Naive thymus-derived CD4-positive, alpha-beta T cell (primary cell): ENCODE measurements at regions of chrX and their contacts with region 1.

Region 1: GRCh38 chrX:119693040-119693995 is at the start of gene SEPTIN6:
- DNase-seq: peak; percentile 69 to 93 (median 88)
- ATAC-seq: peak; percentile 83
- H3K4me3 ChIP-seq: peak within 1 kb of the TSS; percentile 77
- H3K4me3 Mint-ChIP-seq: peak within 1 kb of the TSS; percentile 96 to 100 (median 99)
- H3K27ac ChIP-seq: peak within 1 kb of the TSS; percentile 89
- H3K27ac Mint-ChIP-seq: peak within 1 kb of the TSS; percentile 95 to 99 (median 98)
- H3K4me1 ChIP-seq: peaks cover 0 to 7% of the 10 kb centered on the region in 2 donors
- H3K4me1 Mint-ChIP-seq: peaks cover 7 to 41% (median 13%) of the 10 kb centered on the region in 7 donors
- H3K27me3 ChIP-seq: no peaks in the 10 kb centered on the region
- H3K27me3 Mint-ChIP-seq: no peaks in the 10 kb centered on the region
- total RNA-seq, gene SEPTIN6: 151 to 315 (median 221) TPM

Region 2: GRCh38 chrX:118928151-118928550 is 765.2 kb before region 1 on chrX:
- CTCF ChIA-PET with region 1: no interaction called
- POLR2A ChIA-PET with region 1: no interaction called
- intact Hi-C with region 1: no loop called
- DNase-seq: no peak
- ATAC-seq: no peak
- H3K4me3 ChIP-seq: no peak overlapping the region
- H3K4me3 Mint-ChIP-seq: no peak overlapping the region
- H3K27ac ChIP-seq: no peak overlapping the region
- H3K27ac Mint-ChIP-seq: no peak overlapping the region
- H3K4me1 ChIP-seq: no peaks in the 10 kb centered on the region
- H3K4me1 Mint-ChIP-seq: no peaks in the 10 kb centered on the region
- H3K27me3 ChIP-seq: no peaks in the 10 kb centered on the region
- H3K27me3 Mint-ChIP-seq: no peaks in the 10 kb centered on the region

Region 3: DNA sequence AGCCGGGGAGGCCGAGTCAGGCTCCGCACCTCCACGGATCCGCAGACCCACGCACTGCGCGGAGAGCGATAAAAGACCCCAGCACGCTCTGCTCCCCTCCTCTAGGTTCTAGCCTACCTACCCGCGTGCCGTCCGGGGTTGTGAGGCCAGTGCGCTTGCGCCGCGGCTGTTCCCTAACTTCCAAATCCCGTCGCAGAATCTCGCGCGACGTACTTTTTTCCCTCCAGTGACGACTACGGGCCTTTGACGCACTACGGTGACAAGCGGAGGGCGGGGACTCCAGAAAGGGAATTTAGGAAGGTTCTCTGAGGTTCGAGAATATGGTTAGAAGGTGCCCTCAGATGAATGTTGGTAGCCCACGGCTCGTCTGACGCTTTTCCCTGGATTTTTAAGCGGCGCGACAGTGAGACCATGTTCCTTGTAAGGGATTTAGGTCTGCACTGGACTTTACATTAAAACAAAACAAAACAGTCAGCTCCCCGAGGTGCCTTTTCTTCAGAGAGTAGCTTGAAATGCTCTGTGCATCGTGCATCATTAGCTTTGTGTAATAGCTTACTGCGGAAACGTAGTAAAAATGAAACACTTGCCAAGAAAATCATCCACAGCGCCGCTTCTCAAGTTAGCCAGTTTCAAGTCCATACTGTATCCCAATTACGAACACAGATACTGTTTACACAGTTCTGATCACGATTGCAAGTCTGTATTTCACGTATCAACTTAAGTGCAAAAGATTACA is 86.9 kb before region 1 on chrX and contains the start of gene NKRF:
- CTCF ChIA-PET with region 1: interaction called, 5 read pairs
- POLR2A ChIA-PET with region 1: interaction called, 15 read pairs
- intact Hi-C with region 1: loop called (anchors 1 to 2 kb)
- DNase-seq: peak; percentile 76 to 92 (median 88)
- ATAC-seq: peak; percentile 88
- H3K4me3 ChIP-seq: peak within 1 kb of the TSS; percentile 71
- H3K4me3 Mint-ChIP-seq: peak within 1 kb of the TSS; percentile 93 to 100 (median 94)
- H3K27ac ChIP-seq: peak within 1 kb of the TSS; percentile 90
- H3K27ac Mint-ChIP-seq: peak within 1 kb of the TSS; percentile 91 to 99 (median 98)
- H3K4me1 ChIP-seq: peaks cover 5 to 11% of the 10 kb centered on the region in 2 donors
- H3K4me1 Mint-ChIP-seq: peaks cover 6 to 48% (median 39%) of the 10 kb centered on the region in 7 donors
- H3K27me3 ChIP-seq: no peaks in the 10 kb centered on the region
- H3K27me3 Mint-ChIP-seq: peaks cover 0 to 4% (median 0%) of the 10 kb centered on the region in 5 donors
- total RNA-seq, gene NKRF: 9.9 to 16.4 (median 14.0) TPM

Region 4: GRCh38 chrX:119655125-119655524 is 38.2 kb before region 1 on chrX:
- CTCF ChIA-PET with region 1: interaction called, 4 read pairs
- POLR2A ChIA-PET with region 1: interaction called, 43 read pairs
- intact Hi-C with region 1: loop called in 1 of 2 experiments (anchors 1 kb)
- DNase-seq: peak in 2 of 9 donors; percentile 49 to 73
- ATAC-seq: peak; percentile 45
- H3K4me3 ChIP-seq: no peak overlapping the region
- H3K4me3 Mint-ChIP-seq: peak overlapping the region in 9 of 10 donors; percentile 4 to 76 (median 45)
- H3K27ac ChIP-seq: peak overlapping the region; percentile 57
- H3K27ac Mint-ChIP-seq: peak overlapping the region; percentile 41 to 92 (median 86)
- H3K4me1 ChIP-seq: peaks cover 0 to 18% of the 10 kb centered on the region in 2 donors
- H3K4me1 Mint-ChIP-seq: peaks cover 18 to 47% (median 36%) of the 10 kb centered on the region in 7 donors
- H3K27me3 ChIP-seq: no peaks in the 10 kb centered on the region
- H3K27me3 Mint-ChIP-seq: no peaks in the 10 kb centered on the region

Region 5: GRCh38 chrX:119676949-119677653 is 16.2 kb before region 1 on chrX:
- CTCF ChIA-PET with region 1: interaction called, 22 read pairs
- POLR2A ChIA-PET with region 1: interaction called, 290 read pairs
- intact Hi-C with region 1: loop called (anchors 1 kb)
- DNase-seq: no peak
- ATAC-seq: peak; percentile 12
- H3K4me3 ChIP-seq: peak overlapping the region; percentile 54
- H3K4me3 Mint-ChIP-seq: peak overlapping the region; percentile 80 to 98 (median 88)
- H3K27ac ChIP-seq: peak overlapping the region; percentile 73
- H3K27ac Mint-ChIP-seq: peak overlapping the region; percentile 90 to 98 (median 95)
- H3K4me1 ChIP-seq: peaks cover 43 to 59% of the 10 kb centered on the region in 2 donors
- H3K4me1 Mint-ChIP-seq: peaks cover 14 to 93% (median 52%) of the 10 kb centered on the region in 7 donors
- H3K27me3 ChIP-seq: no peaks in the 10 kb centered on the region
- H3K27me3 Mint-ChIP-seq: no peaks in the 10 kb centered on the region

Region 6: DNA sequence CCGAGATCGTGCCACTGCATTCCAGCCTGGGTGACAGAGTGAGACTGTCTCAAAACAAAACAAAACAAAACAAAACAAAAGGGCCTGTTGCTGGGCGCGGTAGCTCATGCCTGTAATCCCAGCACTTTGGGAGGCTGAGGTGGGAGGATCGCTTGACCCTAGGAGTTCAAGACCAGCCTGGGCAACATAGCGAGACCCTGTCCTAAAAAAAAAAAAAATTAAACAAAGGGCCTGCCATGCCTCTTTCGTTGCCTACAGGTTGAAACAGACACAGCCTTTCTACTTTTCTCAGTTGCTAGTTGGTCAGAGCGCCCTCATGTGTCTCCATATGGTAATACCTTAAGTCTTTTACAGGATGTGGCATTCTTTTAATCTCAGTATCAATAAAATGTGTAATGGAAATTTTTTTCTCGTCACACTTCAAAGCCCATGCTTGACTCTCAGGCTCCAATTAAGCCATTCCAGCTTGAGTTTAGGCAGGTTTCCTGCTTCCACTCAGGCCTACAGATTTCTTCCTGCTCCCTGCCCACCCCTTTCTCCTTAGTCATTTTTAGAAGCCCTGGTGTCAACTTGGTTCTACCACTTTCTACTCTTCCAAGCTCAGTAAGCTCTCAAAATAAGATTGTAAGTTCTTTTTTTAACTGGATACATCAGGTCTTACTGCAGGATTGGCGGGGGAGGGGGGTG is 60.4 kb after region 1 on chrX:
- CTCF ChIA-PET with region 1: interaction called, 4 read pairs
- POLR2A ChIA-PET with region 1: interaction called, 23 read pairs
- intact Hi-C with region 1: loop called (anchors 2 kb)
- DNase-seq: peak in 7 of 9 donors; percentile 77 to 89 (median 80)
- ATAC-seq: peak; percentile 83
- H3K4me3 ChIP-seq: no peak overlapping the region
- H3K4me3 Mint-ChIP-seq: peak overlapping the region; percentile 40 to 81 (median 70)
- H3K27ac ChIP-seq: peak overlapping the region; percentile 76
- H3K27ac Mint-ChIP-seq: peak overlapping the region; percentile 90 to 99 (median 96)
- H3K4me1 ChIP-seq: peaks cover 38 to 39% of the 10 kb centered on the region in 2 donors
- H3K4me1 Mint-ChIP-seq: peaks cover 21 to 50% (median 40%) of the 10 kb centered on the region in 7 donors
- H3K27me3 ChIP-seq: no peaks in the 10 kb centered on the region
- H3K27me3 Mint-ChIP-seq: no peaks in the 10 kb centered on the region